A673 (cell line): ENCODE measurements at regions of chr9 and their contacts with region 1.

Region 1: GRCh38 chr9:130433168-130433946 is 11.4 kb upstream of the ASS1 start:
- DNase-seq: peak; percentile 70
- H3K4me3 ChIP-seq: peak overlapping the region; percentile 34
- H3K27ac ChIP-seq: no peak overlapping the region
- H3K4me1 ChIP-seq: no peaks in the 10 kb centered on the region
- H3K27me3 ChIP-seq: peaks cover 23% of the 10 kb centered on the region
- CTCF ChIP-seq: peak; percentile 61

Region 2: DNA sequence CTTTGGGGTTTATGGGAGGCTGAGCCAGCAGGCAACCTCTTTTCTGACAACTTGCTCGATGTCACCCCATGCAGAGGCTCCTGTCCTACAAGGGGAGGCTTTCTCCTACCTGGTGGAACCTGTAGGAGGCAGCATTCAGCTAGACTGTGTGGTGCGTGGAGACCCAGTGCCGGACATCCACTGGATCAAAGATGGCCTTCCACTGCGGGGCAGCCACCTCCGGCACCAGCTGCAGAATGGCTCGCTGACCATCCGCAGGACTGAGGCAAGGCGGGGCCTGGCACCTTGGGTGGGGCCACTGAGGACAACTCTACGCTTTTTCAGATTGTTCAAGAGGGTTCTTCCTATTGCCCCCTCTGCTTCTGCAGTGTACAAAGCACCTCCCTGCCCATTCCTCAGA is 24.7 kb before region 1 on chr9:
- CTCF ChIA-PET with region 1: no interaction called
- POLR2A ChIA-PET with region 1: no interaction called
- intact Hi-C with region 1: no loop called
- DNase-seq: no peak
- H3K4me3 ChIP-seq: no peak overlapping the region
- H3K27ac ChIP-seq: no peak overlapping the region
- H3K4me1 ChIP-seq: no peaks in the 10 kb centered on the region
- H3K27me3 ChIP-seq: peaks cover 16% of the 10 kb centered on the region
- CTCF ChIP-seq: 0 out of 2 replicates have a peak, but pooled peaks have one; percentile 19

Region 3: GRCh38 chr9:130662099-130662969 is 229.0 kb after region 1 on chr9:
- CTCF ChIA-PET with region 1: interaction called, 3 read pairs
- POLR2A ChIA-PET with region 1: interaction called, 10 read pairs
- intact Hi-C with region 1: no loop called
- DNase-seq: no peak
- H3K4me3 ChIP-seq: no peak overlapping the region
- H3K27ac ChIP-seq: no peak overlapping the region
- H3K4me1 ChIP-seq: peaks cover 31% of the 10 kb centered on the region
- H3K27me3 ChIP-seq: peaks cover 99% of the 10 kb centered on the region
- CTCF ChIP-seq: no peak